ENCODE measurements at regions of chr10 and their contacts with region 1.

Region 1: GRCh38 chr10:101031128-101031795 is at the starts of genes PDZD7 and SFXN3:
- DNase-seq: peak; percentile 98
- H3K4me3 Mint-ChIP-seq: peak within 1 kb of the TSS; percentile 79
- H3K27ac Mint-ChIP-seq: peak within 1 kb of the TSS; percentile 84
- H3K4me1 Mint-ChIP-seq: peaks cover 17% of the 10 kb centered on the region
- H3K27me3 Mint-ChIP-seq: no peaks in the 10 kb centered on the region
- total RNA-seq, gene PDZD7: 0.31 to 0.93 TPM
- total RNA-seq, gene SFXN3: 40.4 to 41.9 TPM

Region 2: DNA sequence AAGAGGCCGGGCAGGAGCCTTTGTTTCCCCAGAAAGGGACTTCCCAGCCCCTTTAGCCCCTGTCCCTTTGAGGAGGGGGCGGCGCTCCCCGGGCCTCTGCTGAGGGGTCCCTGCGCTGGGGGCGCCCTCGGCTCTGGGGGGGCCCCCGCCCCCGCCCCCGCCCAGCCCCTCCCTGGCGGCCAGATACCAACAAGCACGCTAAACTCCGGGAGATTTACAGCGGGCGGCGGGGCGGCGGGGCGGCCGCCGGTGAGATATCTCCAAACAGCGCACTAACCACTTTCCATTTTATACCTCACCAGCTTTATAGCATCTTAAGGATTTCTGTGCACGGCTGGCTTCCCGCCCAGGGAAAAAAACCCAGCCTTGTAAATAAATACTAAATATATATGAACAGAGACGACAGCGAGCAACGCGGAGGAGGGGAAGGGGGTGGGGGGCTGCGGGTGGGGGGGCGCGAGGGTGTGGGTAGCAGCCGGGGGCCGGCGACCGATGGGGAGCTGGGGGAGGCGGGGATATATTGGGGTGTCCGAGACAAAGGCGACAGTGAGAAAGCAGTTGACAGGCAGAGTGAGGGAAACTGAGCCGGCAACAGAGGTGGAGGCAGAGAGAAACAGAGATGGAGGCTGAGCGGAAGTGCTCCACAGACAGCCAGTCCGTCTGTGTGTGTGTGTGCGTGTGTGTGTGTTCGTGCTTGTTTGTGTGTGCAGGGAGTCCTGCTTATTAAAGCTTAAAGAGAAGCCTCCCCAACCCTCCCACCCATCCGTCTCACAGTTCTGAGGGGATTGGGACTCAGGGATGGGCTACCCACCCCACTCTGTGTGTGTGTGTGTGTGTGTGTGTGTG is 409.7 kb before region 1 on chr10:
- CTCF ChIA-PET with region 1: no interaction called
- POLR2A ChIA-PET with region 1: no interaction called
- intact Hi-C with region 1: no loop called
- DNase-seq: peak; percentile 62
- H3K4me3 Mint-ChIP-seq: peak overlapping the region; percentile 60
- H3K27ac Mint-ChIP-seq: no peak overlapping the region
- H3K4me1 Mint-ChIP-seq: no peaks in the 10 kb centered on the region
- H3K27me3 Mint-ChIP-seq: peaks cover 53% of the 10 kb centered on the region

Region 3: GRCh38 chr10:100979791-100980272 is 51.4 kb before region 1 on chr10:
- CTCF ChIA-PET with region 1: no interaction called
- POLR2A ChIA-PET with region 1: no interaction called
- intact Hi-C with region 1: loop called (anchors 5 kb)
- DNase-seq: no peak
- H3K4me3 Mint-ChIP-seq: no peak overlapping the region
- H3K27ac Mint-ChIP-seq: no peak overlapping the region
- H3K4me1 Mint-ChIP-seq: no peaks in the 10 kb centered on the region
- H3K27me3 Mint-ChIP-seq: no peaks in the 10 kb centered on the region

Region 4: DNA sequence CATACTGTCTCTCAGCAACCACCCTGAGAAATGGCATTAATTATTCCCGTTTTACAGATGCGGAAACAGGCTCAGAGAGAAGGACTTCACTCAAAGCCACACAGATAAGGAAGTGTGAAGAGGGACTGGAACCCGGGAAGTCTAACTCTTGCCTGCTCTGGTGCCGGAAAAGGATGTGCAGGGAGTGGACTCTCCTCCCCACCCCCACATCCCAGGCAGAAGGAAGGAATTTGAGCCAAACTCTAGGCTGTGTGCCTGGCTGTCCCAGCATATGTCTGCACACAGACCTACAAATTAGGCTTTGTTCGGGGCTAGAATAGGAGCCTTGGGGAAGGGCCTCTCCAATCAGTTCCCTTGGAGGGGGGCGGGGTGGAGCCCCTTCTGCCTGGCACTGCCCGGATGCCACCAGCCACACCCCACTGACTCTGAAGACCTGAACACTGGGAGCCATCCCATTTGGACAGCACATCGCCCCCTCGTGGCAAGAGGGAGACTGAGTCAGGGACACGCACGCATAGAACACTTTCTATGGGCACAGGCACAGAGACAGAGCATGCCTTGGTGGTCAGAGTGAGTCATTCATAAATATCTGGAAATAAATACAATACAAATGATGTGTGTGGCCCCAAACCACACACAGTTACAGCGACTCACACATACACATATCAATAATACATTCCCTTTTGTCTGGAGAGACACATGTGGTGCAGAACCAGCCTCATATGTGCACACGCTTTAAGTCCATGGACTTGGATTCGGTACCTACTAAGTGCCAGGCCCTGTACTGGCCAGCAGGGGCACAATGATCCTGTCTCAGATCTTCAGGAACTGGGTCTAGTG is 18.5 kb before region 1 on chr10:
- CTCF ChIA-PET with region 1: interaction called, 137 read pairs
- POLR2A ChIA-PET with region 1: interaction called, 11 read pairs
- intact Hi-C with region 1: loop called (anchors 2 kb)
- DNase-seq: peak; percentile 86
- H3K4me3 Mint-ChIP-seq: peak overlapping the region; percentile 20
- H3K27ac Mint-ChIP-seq: no peak overlapping the region
- H3K4me1 Mint-ChIP-seq: peaks cover 22% of the 10 kb centered on the region
- H3K27me3 Mint-ChIP-seq: peaks cover 26% of the 10 kb centered on the region

Region 5: GRCh38 chr10:101042667-101043355 is 11.5 kb after region 1 on chr10:
- CTCF ChIA-PET with region 1: interaction called, 45 read pairs
- POLR2A ChIA-PET with region 1: interaction called, 14 read pairs
- intact Hi-C with region 1: loop called (anchors 1 kb)
- DNase-seq: peak; percentile 96
- H3K4me3 Mint-ChIP-seq: peak overlapping the region; percentile 96
- H3K27ac Mint-ChIP-seq: peak overlapping the region; percentile 89
- H3K4me1 Mint-ChIP-seq: peaks cover 21% of the 10 kb centered on the region
- H3K27me3 Mint-ChIP-seq: peaks cover 18% of the 10 kb centered on the region

Region 6: GRCh38 chr10:101060036-101060950 is 29.0 kb after region 1 on chr10:
- CTCF ChIA-PET with region 1: interaction called, 559 read pairs
- POLR2A ChIA-PET with region 1: interaction called, 10 read pairs
- intact Hi-C with region 1: loop called (anchors 1 kb)
- DNase-seq: peak; percentile 92
- H3K4me3 Mint-ChIP-seq: peak overlapping the region; percentile 95
- H3K27ac Mint-ChIP-seq: peak overlapping the region; percentile 85
- H3K4me1 Mint-ChIP-seq: peaks cover 17% of the 10 kb centered on the region
- H3K27me3 Mint-ChIP-seq: peaks cover 21% of the 10 kb centered on the region

Measured in activated CD4-positive, alpha-beta memory T cell treated with anti-CD3 and anti-CD28 coated beads for 36 hours (primary cell).